WTC11 (cell line): ENCODE measurements at regions of chr4 and their contacts with region 1.

Region 1: GRCh38 chr4:7042697-7043464 is at the start of gene TADA2B:
- DNase-seq: peak; percentile 97
- ATAC-seq: peak; percentile 90
- H3K4me3 Mint-ChIP-seq: peak within 1 kb of the TSS; percentile 83
- H3K27ac Mint-ChIP-seq: no peak within 1 kb of the TSS; the same call in 1 of the 2 replicates
- H3K4me1 Mint-ChIP-seq: peaks cover 42% of the 10 kb centered on the region
- H3K27me3 Mint-ChIP-seq: peaks cover 30% of the 10 kb centered on the region
- CTCF ChIP-seq: no peak; the same call in 1 of the 2 replicates
- total RNA-seq, gene TADA2B: 12.2 to 14.3 TPM (median 13.1 TPM) in 3 replicates

Region 2: GRCh38 chr4:6942238-6942800 is 100.6 kb before region 1 on chr4:
- CTCF ChIA-PET with region 1: interaction called, 10 read pairs
- POLR2A ChIA-PET with region 1: no interaction called
- DNase-seq: no peak
- ATAC-seq: no peak
- H3K4me3 Mint-ChIP-seq: no peak overlapping the region
- H3K27ac Mint-ChIP-seq: peak overlapping the region; percentile 89
- H3K4me1 Mint-ChIP-seq: peaks cover 74% of the 10 kb centered on the region
- H3K27me3 Mint-ChIP-seq: no peaks in the 10 kb centered on the region
- CTCF ChIP-seq: no peak

Region 3: DNA sequence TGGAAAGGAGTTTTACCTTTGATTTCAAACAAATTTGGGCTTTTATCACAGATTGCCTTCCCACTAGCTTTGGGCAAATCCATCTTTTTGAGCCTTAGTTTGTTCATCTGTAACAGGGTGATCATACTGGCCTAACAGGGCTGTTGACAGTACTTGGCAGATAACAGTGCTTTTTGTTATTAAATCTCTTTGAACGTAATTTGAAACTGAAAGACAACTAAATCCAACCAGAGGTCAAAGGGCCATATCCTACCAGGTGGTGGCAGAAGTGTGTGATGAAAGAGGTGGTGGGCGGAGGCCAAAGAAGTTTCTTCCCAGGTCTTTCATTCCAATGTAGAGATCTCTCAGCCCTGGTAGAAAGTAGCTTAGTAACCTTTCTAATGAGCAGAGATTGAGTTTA is 34.9 kb before region 1 on chr4:
- CTCF ChIA-PET with region 1: interaction called, 17 read pairs
- POLR2A ChIA-PET with region 1: no interaction called
- DNase-seq: no peak
- ATAC-seq: peak; percentile 79
- H3K4me3 Mint-ChIP-seq: no peak overlapping the region
- H3K27ac Mint-ChIP-seq: no peak overlapping the region
- H3K4me1 Mint-ChIP-seq: peaks cover 28% of the 10 kb centered on the region
- H3K27me3 Mint-ChIP-seq: peaks cover 2% of the 10 kb centered on the region; the same call in 1 of the 2 replicates
- CTCF ChIP-seq: no peak

Region 4: GRCh38 chr4:7067452-7068278 is 24.8 kb after region 1 on chr4 and contains the start of gene GRPEL1:
- CTCF ChIA-PET with region 1: interaction called, 118 read pairs
- POLR2A ChIA-PET with region 1: interaction called, 16 read pairs
- DNase-seq: peak; percentile 100
- ATAC-seq: peak; percentile 91
- H3K4me3 Mint-ChIP-seq: peak within 1 kb of the TSS; percentile 93
- H3K27ac Mint-ChIP-seq: peak within 1 kb of the TSS; percentile 84; the same call in 1 of the 2 replicates
- H3K4me1 Mint-ChIP-seq: peaks cover 29% of the 10 kb centered on the region
- H3K27me3 Mint-ChIP-seq: peaks cover 33% of the 10 kb centered on the region
- CTCF ChIP-seq: no peak
- total RNA-seq, gene GRPEL1: 45.9 to 50.1 TPM (median 50.0 TPM) in 3 replicates

Region 5: DNA sequence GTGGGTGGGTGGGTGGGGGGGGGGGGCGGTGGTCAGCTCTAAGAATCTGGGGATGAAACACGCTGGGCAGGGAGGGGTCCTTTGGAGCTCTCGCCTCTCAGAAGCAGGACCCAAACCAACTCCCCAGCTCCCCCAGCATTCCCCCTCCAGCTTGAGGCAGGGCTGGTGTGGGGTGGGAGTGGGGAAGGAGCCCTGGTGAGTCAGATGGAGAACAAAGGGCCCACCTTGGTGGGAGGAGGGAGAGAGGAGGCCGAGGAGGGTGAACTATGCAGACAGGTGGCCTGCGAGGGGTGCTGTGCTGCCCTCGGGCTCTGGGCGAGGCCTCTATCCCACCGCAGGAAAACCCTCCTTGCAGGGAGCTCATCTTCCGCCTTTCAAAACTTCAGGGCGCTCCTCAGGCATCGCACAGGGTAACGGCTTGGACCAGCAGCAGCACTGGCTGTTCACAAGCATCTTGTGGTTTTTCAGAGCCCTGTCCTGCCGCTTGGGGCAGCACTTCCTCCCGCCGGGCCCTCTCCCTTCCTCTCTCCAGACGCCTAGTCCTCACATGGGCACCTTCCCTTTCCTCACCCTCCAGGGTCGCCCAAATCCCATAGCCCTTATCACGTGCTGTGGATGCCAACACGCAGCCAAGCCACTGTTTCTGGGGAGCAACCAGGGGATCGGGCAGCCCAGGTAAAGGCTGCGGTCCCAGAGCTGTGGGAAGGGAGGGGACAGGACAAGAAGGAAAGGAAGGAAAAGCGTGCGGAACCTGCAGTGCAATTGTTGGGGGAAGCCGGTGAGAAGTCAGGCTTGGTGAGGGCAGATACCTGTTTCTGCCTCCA is 59.0 kb after region 1 on chr4:
- CTCF ChIA-PET with region 1: interaction called, 25 read pairs
- POLR2A ChIA-PET with region 1: no interaction called
- DNase-seq: peak; percentile 82
- ATAC-seq: peak; percentile 87
- H3K4me3 Mint-ChIP-seq: peak overlapping the region; percentile 89
- H3K27ac Mint-ChIP-seq: no peak overlapping the region
- H3K4me1 Mint-ChIP-seq: peaks cover 15% of the 10 kb centered on the region
- H3K27me3 Mint-ChIP-seq: peaks cover 85% of the 10 kb centered on the region
- CTCF ChIP-seq: peak; percentile 41; the same call in 1 of the 2 replicates